ENCODE measurements at regions of chr17 and their contacts with region 1.

Region 1: DNA sequence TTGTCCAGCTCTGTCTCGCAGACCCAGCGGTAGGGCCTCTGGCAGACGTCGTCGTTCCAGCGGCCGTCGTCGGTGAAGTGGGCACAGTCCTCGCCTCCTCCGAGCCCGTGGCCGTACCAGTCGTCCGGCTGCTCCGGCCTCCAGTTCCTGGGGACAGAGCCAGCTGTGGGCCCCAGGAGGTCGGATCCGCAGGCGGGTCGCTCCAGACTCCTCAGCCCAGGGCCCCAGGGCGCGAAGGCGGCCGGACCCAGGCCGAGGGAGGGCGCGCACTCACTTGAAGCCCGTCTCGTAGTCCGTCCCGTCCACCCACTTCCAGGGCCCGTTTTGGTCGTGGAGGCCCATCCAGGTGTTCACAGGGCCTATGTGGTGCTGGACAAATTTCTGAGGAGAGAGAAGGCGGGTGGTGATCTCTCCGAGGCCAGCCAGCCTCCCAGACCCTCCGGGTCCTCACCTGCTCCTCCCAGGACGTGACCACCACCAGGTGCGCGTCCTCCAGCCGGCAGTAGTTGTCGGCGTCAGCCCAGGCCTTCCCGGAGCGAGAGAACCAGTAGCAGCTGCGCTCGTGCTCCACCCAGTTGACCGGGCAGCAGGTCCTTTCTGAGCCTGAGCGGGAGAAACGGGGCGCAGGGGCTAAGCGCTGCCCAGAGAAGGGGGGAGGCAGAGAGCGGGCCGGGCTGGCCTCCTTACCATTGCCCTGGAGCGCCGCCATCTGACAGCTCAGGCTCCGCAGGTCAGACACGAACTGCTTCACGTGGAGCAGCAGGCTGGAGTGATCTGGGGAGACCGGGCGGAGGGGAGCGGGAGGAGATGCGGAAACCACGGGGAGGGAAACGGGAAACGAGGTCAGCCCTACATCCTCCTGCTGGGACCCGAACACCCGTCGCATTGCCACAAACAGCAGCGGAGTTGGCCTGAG is 5.2 kb downstream of the ASGR1 start:
- DNase-seq: peak in 1 of 2 experiments; percentile 29
- H3K4me3 ChIP-seq: no peak overlapping the region
- H3K4me1 ChIP-seq: peaks cover 8% of the 10 kb centered on the region; the same call in 1 of the 2 replicates
- H3K27me3 ChIP-seq: no peaks in the 10 kb centered on the region

Region 2: GRCh38 chr17:6651357-6651918 is 522.5 kb before region 1 on chr17 and contains the starts of genes C17orf100 and MED31:
- in situ Hi-C with region 1: loop called (anchors 25 kb)
- DNase-seq: peak; percentile 89 to 97
- H3K4me3 ChIP-seq: peak within 1 kb of the TSS; percentile 56
- H3K4me1 ChIP-seq: peaks cover 14% of the 10 kb centered on the region
- H3K27me3 ChIP-seq: no peaks in the 10 kb centered on the region

Region 3: GRCh38 chr17:7035591-7036368 is 138.2 kb before region 1 on chr17 and contains the start of gene SLC16A13:
- in situ Hi-C with region 1: no loop called
- DNase-seq: peak; percentile 92 to 98
- H3K4me3 ChIP-seq: peak within 1 kb of the TSS; percentile 87
- H3K4me1 ChIP-seq: peaks cover 4% of the 10 kb centered on the region
- H3K27me3 ChIP-seq: no peaks in the 10 kb centered on the region

Region 4: GRCh38 chr17:7740481-7741001 is 566.6 kb after region 1 on chr17:
- in situ Hi-C with region 1: no loop called
- DNase-seq: no peak
- H3K4me3 ChIP-seq: no peak overlapping the region
- H3K4me1 ChIP-seq: peaks cover 5% of the 10 kb centered on the region
- H3K27me3 ChIP-seq: peaks cover 23% of the 10 kb centered on the region

Measured in HAP-1 (cell line).